Activated CD4-positive, alpha-beta T cell treated with anti-CD3 and anti-CD28 coated beads for 36 hours (primary cell): ENCODE measurements at regions of chr14 and their contacts with region 1.

Region 1: DNA sequence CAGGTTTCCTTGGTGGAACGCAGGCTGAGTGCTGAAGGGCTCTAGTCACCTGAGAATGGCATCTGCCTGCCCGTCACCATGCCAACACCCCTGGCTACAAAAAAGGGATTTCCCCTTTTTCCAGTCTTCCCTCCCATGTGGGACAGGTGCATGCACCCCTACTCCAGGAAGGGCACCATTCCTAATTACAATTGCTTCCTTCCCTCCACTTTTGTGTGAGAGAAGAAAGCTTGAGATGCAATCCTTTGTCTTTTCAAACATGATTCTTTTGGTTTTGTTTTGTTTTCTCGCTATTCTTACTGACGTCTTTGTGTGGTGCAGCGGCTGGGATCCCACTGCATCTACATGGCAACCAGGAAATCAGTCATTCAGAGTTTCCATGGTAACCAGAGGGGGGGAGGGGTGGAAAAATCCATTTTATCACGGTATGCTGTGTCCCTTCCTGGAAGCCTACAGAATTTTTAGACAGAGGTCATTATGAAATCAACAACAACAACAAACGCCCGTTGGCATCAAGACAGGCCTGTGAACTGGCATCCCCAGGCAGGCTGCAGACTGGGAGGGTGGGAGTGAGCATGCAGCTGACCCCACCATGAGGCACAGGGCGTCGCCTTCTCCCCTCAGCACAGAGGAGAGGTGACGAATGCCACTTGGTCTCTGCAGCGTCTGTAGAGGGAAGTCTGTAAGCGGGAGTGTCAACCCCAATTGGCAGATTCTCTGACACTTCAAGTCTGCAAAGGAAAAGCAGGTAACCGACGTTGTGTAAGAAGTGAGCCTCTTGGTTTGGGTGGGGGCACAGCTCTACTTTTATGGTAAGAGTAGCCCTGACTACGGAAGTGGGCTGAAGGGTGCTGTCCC is 13.6 kb upstream of the GNG2 start:
- DNase-seq: peak; percentile 91
- ATAC-seq: peak; percentile 76
- H3K4me3 Mint-ChIP-seq: peak overlapping the region; percentile 80
- H3K27ac Mint-ChIP-seq: peak overlapping the region; percentile 99
- H3K4me1 Mint-ChIP-seq: peaks cover 78% of the 10 kb centered on the region
- H3K27me3 Mint-ChIP-seq: no peaks in the 10 kb centered on the region

Region 2: GRCh38 chr14:50520947-50521815 is 1325.7 kb before region 1 on chr14:
- CTCF ChIA-PET with region 1: no interaction called
- POLR2A ChIA-PET with region 1: no interaction called
- intact Hi-C with region 1: loop called in 1 of 2 experiments (anchors 5 kb)
- DNase-seq: peak; percentile 84
- ATAC-seq: peak; percentile 81
- H3K4me3 Mint-ChIP-seq: peak overlapping the region; percentile 55
- H3K27ac Mint-ChIP-seq: peak overlapping the region; percentile 94
- H3K4me1 Mint-ChIP-seq: peaks cover 56% of the 10 kb centered on the region
- H3K27me3 Mint-ChIP-seq: no peaks in the 10 kb centered on the region

Region 3: GRCh38 chr14:51472881-51473280 is 374.0 kb before region 1 on chr14:
- CTCF ChIA-PET with region 1: no interaction called
- POLR2A ChIA-PET with region 1: no interaction called
- intact Hi-C with region 1: no loop called
- DNase-seq: no peak
- ATAC-seq: no peak
- H3K4me3 Mint-ChIP-seq: no peak overlapping the region
- H3K27ac Mint-ChIP-seq: no peak overlapping the region
- H3K4me1 Mint-ChIP-seq: peaks cover 7% of the 10 kb centered on the region
- H3K27me3 Mint-ChIP-seq: peaks cover 5% of the 10 kb centered on the region

Region 4: DNA sequence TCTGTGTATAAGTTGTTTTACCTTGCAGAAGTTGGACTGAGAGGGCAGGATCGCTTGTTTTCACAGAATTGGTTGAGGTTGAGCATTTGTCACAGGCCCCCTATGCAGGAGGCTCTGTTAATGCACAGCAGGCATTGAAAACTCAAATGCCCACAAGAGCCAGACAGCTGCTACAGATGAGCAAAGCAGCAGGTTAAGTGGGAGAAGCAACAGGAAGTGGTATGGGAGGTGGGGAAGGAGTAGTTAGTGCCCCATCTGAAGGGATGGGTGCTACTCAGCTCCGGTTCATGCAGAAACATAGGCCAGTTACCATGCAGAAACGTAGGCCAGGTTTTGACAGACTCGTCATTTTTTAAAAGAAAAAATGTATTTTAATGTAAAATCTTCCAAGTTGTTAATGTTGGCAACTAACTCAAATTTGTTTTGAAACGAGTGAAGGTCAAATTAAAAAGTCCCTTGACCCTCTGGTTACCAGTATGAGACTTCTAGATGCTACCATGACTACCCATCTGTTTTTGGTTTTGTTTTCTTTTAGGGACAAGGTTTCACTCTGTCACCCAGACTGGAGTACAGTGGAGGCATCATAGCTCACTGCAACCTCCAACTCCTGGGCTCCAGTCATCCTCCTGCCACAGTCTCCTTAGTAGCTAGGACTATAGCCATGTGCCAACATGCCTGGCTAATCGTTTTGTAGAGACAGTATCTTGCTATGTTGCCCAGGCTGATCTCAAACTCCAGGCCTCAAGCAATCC is 279.9 kb before region 1 on chr14:
- CTCF ChIA-PET with region 1: no interaction called
- POLR2A ChIA-PET with region 1: no interaction called
- intact Hi-C with region 1: no loop called
- DNase-seq: peak; percentile 13
- ATAC-seq: peak; percentile 69
- H3K4me3 Mint-ChIP-seq: no peak overlapping the region
- H3K27ac Mint-ChIP-seq: no peak overlapping the region
- H3K4me1 Mint-ChIP-seq: peaks cover 18% of the 10 kb centered on the region
- H3K27me3 Mint-ChIP-seq: peaks cover 3% of the 10 kb centered on the region

Region 5: DNA sequence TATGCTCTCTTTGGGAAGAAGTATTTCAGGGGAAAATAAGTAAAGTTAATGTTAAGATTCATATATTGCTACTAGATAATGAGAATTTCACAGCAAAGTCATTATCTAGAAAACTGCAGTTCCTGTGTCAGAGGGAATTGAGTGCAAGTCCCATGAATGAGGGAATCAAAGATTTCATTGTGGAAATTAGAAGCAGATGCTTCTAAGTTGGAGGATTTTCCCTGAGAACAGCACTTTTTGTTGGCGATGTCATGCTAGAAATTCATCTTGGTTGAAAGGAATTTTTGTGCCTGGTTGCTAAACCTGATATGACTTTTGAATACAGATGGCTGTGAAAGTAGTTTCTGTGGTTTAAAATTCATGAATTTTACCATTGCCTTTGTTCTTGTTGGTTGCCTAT is 169.6 kb before region 1 on chr14:
- CTCF ChIA-PET with region 1: no interaction called
- POLR2A ChIA-PET with region 1: no interaction called
- intact Hi-C with region 1: loop called in 1 of 2 experiments (anchors 1 kb)
- DNase-seq: no peak
- ATAC-seq: no peak
- H3K4me3 Mint-ChIP-seq: no peak overlapping the region
- H3K27ac Mint-ChIP-seq: no peak overlapping the region
- H3K4me1 Mint-ChIP-seq: peaks cover 18% of the 10 kb centered on the region
- H3K27me3 Mint-ChIP-seq: peaks cover 7% of the 10 kb centered on the region

Region 6: DNA sequence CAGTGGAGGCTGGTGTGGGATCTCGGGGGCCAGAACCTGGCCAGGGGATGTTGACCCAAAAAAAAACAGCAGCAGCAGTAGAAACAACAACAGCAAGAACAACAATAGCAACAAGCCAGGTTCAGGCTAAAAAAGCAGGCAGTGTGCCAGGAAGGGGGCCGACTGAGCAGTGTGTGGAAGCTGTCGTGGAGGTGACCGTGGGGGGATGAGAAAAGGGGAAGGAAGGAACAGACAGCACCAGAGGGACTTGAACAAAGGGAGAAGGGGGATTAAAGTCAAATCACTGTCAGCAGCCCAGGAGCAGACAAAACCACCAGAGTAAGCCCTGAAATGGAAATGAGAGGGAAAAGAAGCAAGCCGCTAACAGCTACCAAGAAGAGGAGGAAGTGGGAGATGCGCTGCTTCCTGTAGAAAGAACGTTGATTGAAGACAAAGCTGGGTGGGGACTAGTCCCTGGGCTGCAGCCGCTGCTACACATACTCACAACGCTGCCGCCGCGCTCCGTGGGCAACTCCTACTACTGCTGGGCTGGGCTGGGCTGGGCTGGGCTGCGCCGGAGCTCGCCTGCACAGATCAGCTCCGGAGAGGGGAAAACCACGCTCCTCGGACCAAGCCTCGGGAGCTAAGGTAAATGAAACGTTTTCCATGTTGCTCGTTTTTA is 13.4 kb after region 1 on chr14 and contains the start of gene GNG2:
- CTCF ChIA-PET with region 1: interaction called, 37 read pairs
- POLR2A ChIA-PET with region 1: interaction called, 23 read pairs
- intact Hi-C with region 1: loop called (anchors 1 kb)
- DNase-seq: peak; percentile 90
- ATAC-seq: peak; percentile 93
- H3K4me3 Mint-ChIP-seq: peak within 1 kb of the TSS; percentile 90
- H3K27ac Mint-ChIP-seq: peak within 1 kb of the TSS; percentile 82
- H3K4me1 Mint-ChIP-seq: peaks cover 50% of the 10 kb centered on the region
- H3K27me3 Mint-ChIP-seq: no peaks in the 10 kb centered on the region
- total RNA-seq, gene GNG2: 133 to 136 TPM

Region 7: GRCh38 chr14:51901475-51902024 is 54.7 kb after region 1 on chr14:
- CTCF ChIA-PET with region 1: interaction called, 5 read pairs
- POLR2A ChIA-PET with region 1: interaction called, 6 read pairs
- intact Hi-C with region 1: loop called (anchors 1 kb)
- DNase-seq: no peak
- ATAC-seq: no peak
- H3K4me3 Mint-ChIP-seq: no peak overlapping the region
- H3K27ac Mint-ChIP-seq: no peak overlapping the region
- H3K4me1 Mint-ChIP-seq: peaks cover 61% of the 10 kb centered on the region
- H3K27me3 Mint-ChIP-seq: no peaks in the 10 kb centered on the region

Region 8: GRCh38 chr14:52189330-52189729 is 342.5 kb after region 1 on chr14:
- CTCF ChIA-PET with region 1: no interaction called
- POLR2A ChIA-PET with region 1: no interaction called
- intact Hi-C with region 1: loop called in 1 of 2 experiments (anchors 5 kb)
- DNase-seq: no peak
- ATAC-seq: peak; percentile 71
- H3K4me3 Mint-ChIP-seq: no peak overlapping the region
- H3K27ac Mint-ChIP-seq: no peak overlapping the region
- H3K4me1 Mint-ChIP-seq: peaks cover 19% of the 10 kb centered on the region
- H3K27me3 Mint-ChIP-seq: peaks cover 3% of the 10 kb centered on the region